Uterus (tissue), 4 donors: ENCODE measurements at regions of chr6 and their contacts with region 1.

Region 1: GRCh38 chr6:147642458-147642857 is 134.0 kb downstream of the SAMD5 start:
- DNase-seq: no peak
- H3K4me3 ChIP-seq: no peak overlapping the region
- H3K27ac ChIP-seq: no peak overlapping the region
- H3K4me1 ChIP-seq: no peaks in the 10 kb centered on the region
- H3K27me3 ChIP-seq: no peaks in the 10 kb centered on the region
- CTCF ChIP-seq: no peak
- POLR2A ChIP-seq: no peak

Region 2: GRCh38 chr6:147699637-147700036 is 57.2 kb after region 1 on chr6:
- intact Hi-C with region 1: loop called (anchors 10 kb)
- DNase-seq: no peak
- H3K4me3 ChIP-seq: no peak overlapping the region
- H3K27ac ChIP-seq: no peak overlapping the region
- H3K4me1 ChIP-seq: no peaks in the 10 kb centered on the region
- H3K27me3 ChIP-seq: no peaks in the 10 kb centered on the region
- CTCF ChIP-seq: no peak
- POLR2A ChIP-seq: no peak